BJ (cell line): ENCODE measurements at regions of chr19 and their contacts with region 1.

Region 1: GRCh38 chr19:1315470-1316231 is 30.0 kb downstream of the EFNA2 start:
- DNase-seq: no peak
- H3K4me3 ChIP-seq: peak overlapping the region; percentile 14; the same call in 1 of the 2 replicates
- H3K27me3 ChIP-seq: peaks cover 9% of the 10 kb centered on the region
- CTCF ChIP-seq: peak; percentile 61

Region 2: GRCh38 chr19:1275260-1275975 is 40.2 kb before region 1 on chr19 and contains the start of gene FAM174C:
- CTCF ChIA-PET with region 1: interaction called, 10 read pairs
- POLR2A ChIA-PET with region 1: interaction called, 3 read pairs
- DNase-seq: peak; percentile 57
- H3K4me3 ChIP-seq: peak within 1 kb of the TSS; percentile 75
- H3K27me3 ChIP-seq: no peaks in the 10 kb centered on the region
- CTCF ChIP-seq: no peak
- polyA plus RNA-seq, gene FAM174C: 24.6 and 37.5 TPM in 2 replicates

Region 3: DNA sequence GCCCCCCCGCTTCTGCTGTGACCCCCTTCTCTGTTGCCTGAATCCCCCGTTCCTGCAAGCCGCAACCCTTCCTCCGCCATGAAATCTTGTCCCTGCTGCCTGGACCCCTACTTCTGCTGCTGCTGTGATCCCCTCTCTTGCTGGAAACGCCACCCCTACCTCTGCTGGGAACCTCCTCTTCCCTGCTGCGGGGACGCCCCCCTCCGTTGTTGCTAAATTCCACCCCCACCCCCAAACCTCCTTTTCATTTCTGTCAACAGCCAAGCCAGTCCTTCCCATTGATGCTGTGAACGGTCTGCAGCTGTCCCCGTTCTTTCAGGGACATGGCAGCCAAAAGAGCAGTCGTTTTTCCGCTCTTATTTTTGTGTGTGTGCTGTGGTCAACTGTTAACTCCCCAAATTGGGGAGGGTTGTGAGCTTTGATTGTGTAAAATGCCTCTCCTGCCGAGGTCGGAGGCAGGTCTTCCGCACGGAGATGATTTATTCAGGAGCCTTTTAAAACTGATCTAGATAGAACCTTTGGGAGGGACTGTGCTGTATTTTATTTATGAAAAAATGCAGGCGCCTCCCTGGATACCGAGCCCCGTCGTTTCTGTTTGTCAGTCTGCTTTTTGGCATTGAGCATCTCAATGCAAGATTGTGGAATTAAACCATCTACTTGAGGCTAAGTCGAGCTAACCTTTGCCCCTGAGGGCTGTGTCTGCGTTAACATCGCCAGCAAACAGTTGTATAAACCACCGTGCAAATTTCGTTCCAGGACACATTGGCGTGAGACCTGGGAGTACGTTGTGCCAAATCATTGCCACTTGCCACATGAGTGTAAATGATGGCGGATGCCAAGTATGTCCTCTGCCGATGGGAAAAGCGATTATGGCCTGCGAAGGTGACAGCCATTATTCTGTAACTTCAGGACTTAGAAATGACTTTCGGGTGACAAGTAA is 40.2 kb after region 1 on chr19:
- CTCF ChIA-PET with region 1: interaction called, 10 read pairs
- POLR2A ChIA-PET with region 1: interaction called, 25 read pairs
- DNase-seq: no peak
- H3K4me3 ChIP-seq: peak overlapping the region; percentile 74
- H3K27me3 ChIP-seq: no peaks in the 10 kb centered on the region
- CTCF ChIP-seq: no peak

Region 4: GRCh38 chr19:1360818-1361461 is 45.3 kb after region 1 on chr19:
- CTCF ChIA-PET with region 1: interaction called, 10 read pairs
- POLR2A ChIA-PET with region 1: interaction called, 25 read pairs
- DNase-seq: peak; percentile 77
- H3K4me3 ChIP-seq: peak overlapping the region; percentile 27
- H3K27me3 ChIP-seq: no peaks in the 10 kb centered on the region
- CTCF ChIP-seq: no peak

Region 5: GRCh38 chr19:1373534-1374249 is 58.0 kb after region 1 on chr19:
- CTCF ChIA-PET with region 1: interaction called, 16 read pairs
- POLR2A ChIA-PET with region 1: no interaction called
- DNase-seq: no peak
- H3K4me3 ChIP-seq: no peak overlapping the region
- H3K27me3 ChIP-seq: no peaks in the 10 kb centered on the region
- CTCF ChIP-seq: no peak